CD8-positive, alpha-beta T cell (primary cell): ENCODE measurements at regions of chr2 and their contacts with region 1.

Region 1: GRCh38 chr2:30208452-30208851 is 22.9 kb upstream of the LBH start:
- DNase-seq: peak in 6 of 9 experiments; percentile 37 to 73 (median 55)
- ATAC-seq: peak; percentile 59
- H3K4me3 ChIP-seq: peak overlapping the region in 1 of 2 experiments; percentile 1
- H3K4me3 Mint-ChIP-seq: peak overlapping the region; percentile 59
- H3K27ac ChIP-seq: peak overlapping the region in 1 of 2 experiments; percentile 40
- H3K27ac Mint-ChIP-seq: peak overlapping the region; percentile 82
- H3K4me1 ChIP-seq: peaks cover 25% of the 10 kb centered on the region
- H3K4me1 Mint-ChIP-seq: peaks cover 26% of the 10 kb centered on the region
- H3K27me3 ChIP-seq: no peaks in the 10 kb centered on the region
- H3K27me3 Mint-ChIP-seq: no peaks in the 10 kb centered on the region
- CTCF ChIP-seq: peak; percentile 81

Region 2: GRCh38 chr2:29786361-29786760 is 422.1 kb before region 1 on chr2:
- CTCF ChIA-PET with region 1: no interaction called
- POLR2A ChIA-PET with region 1: no interaction called
- intact Hi-C with region 1: no loop called
- DNase-seq: no peak
- ATAC-seq: no peak
- H3K4me3 ChIP-seq: no peak overlapping the region
- H3K4me3 Mint-ChIP-seq: no peak overlapping the region
- H3K27ac ChIP-seq: no peak overlapping the region
- H3K27ac Mint-ChIP-seq: no peak overlapping the region
- H3K4me1 ChIP-seq: no peaks in the 10 kb centered on the region
- H3K4me1 Mint-ChIP-seq: no peaks in the 10 kb centered on the region
- H3K27me3 ChIP-seq: no peaks in the 10 kb centered on the region
- H3K27me3 Mint-ChIP-seq: peaks cover 15% of the 10 kb centered on the region
- CTCF ChIP-seq: no peak

Region 3: GRCh38 chr2:30115141-30115980 is 93.1 kb before region 1 on chr2:
- CTCF ChIA-PET with region 1: no interaction called
- POLR2A ChIA-PET with region 1: no interaction called
- intact Hi-C with region 1: no loop called
- DNase-seq: peak; percentile 30 to 73 (median 67)
- ATAC-seq: peak; percentile 49
- H3K4me3 ChIP-seq: no peak overlapping the region
- H3K4me3 Mint-ChIP-seq: no peak overlapping the region
- H3K27ac ChIP-seq: no peak overlapping the region
- H3K27ac Mint-ChIP-seq: peak overlapping the region; percentile 3
- H3K4me1 ChIP-seq: peaks cover 7% of the 10 kb centered on the region
- H3K4me1 Mint-ChIP-seq: peaks cover 7% of the 10 kb centered on the region
- H3K27me3 ChIP-seq: no peaks in the 10 kb centered on the region
- H3K27me3 Mint-ChIP-seq: no peaks in the 10 kb centered on the region
- CTCF ChIP-seq: peak; percentile 66

Region 4: GRCh38 chr2:30225131-30225762 is 16.8 kb after region 1 on chr2:
- CTCF ChIA-PET with region 1: interaction called, 347 read pairs
- POLR2A ChIA-PET with region 1: interaction called, 76 read pairs
- intact Hi-C with region 1: loop called (anchors 1 to 2 kb)
- DNase-seq: peak in 8 of 9 experiments; percentile 37 to 86 (median 57)
- ATAC-seq: peak; percentile 68
- H3K4me3 ChIP-seq: peak overlapping the region; percentile 59 to 61
- H3K4me3 Mint-ChIP-seq: peak overlapping the region; percentile 99
- H3K27ac ChIP-seq: peak overlapping the region; percentile 78 to 93
- H3K27ac Mint-ChIP-seq: peak overlapping the region; percentile 100
- H3K4me1 ChIP-seq: peaks cover 76% of the 10 kb centered on the region
- H3K4me1 Mint-ChIP-seq: peaks cover 83% of the 10 kb centered on the region
- H3K27me3 ChIP-seq: no peaks in the 10 kb centered on the region
- H3K27me3 Mint-ChIP-seq: no peaks in the 10 kb centered on the region
- CTCF ChIP-seq: no peak

Region 5: DNA sequence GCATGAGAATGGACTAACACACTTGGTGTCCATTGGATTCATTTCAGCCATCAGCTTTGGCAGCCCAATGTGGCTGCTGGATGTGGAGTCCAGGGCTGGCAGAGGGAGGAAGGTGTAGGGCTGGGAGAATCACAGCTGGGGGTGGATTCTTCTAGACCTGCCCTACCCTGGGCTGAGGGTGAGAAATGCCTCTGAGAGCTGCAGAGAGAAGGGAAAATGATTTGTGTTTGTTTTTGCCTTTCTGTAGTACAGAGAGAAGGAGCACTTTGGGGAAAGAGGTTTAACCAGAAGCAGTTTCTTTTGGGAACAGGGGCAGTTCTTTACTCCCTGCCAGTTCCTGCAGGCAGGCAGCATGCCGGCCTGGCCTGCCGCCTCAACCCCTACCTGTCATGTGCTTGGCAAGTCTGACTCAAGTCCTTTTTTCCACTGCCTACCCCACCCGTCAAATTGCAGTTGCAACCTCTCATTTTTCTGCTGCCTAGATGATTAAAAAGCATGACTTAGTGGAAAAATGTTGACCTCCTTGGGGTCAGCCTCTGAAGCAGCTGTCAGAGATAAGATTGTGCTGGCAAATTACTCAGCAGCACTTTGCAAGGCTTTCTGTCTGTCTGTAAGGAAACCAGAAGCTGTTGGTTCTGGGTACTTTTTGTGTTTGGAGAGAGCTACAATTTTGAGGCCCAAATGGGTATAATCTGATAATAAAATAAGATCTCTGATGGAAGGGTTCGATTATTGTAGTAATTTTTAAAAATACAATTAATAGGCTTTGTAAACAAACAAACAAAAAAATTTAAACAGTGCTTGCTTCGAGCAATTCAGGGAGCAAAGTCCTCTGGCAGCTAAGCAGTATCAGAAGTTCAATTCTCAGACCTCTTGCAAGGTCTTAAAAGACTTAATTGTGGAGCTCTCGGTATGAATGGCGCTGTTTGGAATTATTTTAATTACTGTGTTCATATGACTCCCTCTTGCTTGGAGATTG is 44.6 kb after region 1 on chr2:
- CTCF ChIA-PET with region 1: interaction called, 29 read pairs
- POLR2A ChIA-PET with region 1: interaction called, 3 read pairs
- intact Hi-C with region 1: no loop called
- DNase-seq: peak in 7 of 9 experiments; percentile 36 to 64 (median 55)
- ATAC-seq: peak; percentile 37
- H3K4me3 ChIP-seq: peak overlapping the region in 1 of 2 experiments; percentile 17
- H3K4me3 Mint-ChIP-seq: peak overlapping the region; percentile 46
- H3K27ac ChIP-seq: peak overlapping the region; percentile 28 to 68
- H3K27ac Mint-ChIP-seq: peak overlapping the region; percentile 98
- H3K4me1 ChIP-seq: peaks cover 97% of the 10 kb centered on the region
- H3K4me1 Mint-ChIP-seq: peaks cover 96% of the 10 kb centered on the region
- H3K27me3 ChIP-seq: no peaks in the 10 kb centered on the region
- H3K27me3 Mint-ChIP-seq: no peaks in the 10 kb centered on the region
- CTCF ChIP-seq: no peak

Region 6: GRCh38 chr2:30366199-30366691 is 157.8 kb after region 1 on chr2:
- CTCF ChIA-PET with region 1: interaction called, 21 read pairs
- POLR2A ChIA-PET with region 1: no interaction called
- intact Hi-C with region 1: no loop called
- DNase-seq: peak in 6 of 9 experiments; percentile 25 to 68 (median 37)
- ATAC-seq: peak; percentile 70
- H3K4me3 ChIP-seq: no peak overlapping the region
- H3K4me3 Mint-ChIP-seq: no peak overlapping the region
- H3K27ac ChIP-seq: no peak overlapping the region
- H3K27ac Mint-ChIP-seq: peak overlapping the region; percentile 19
- H3K4me1 ChIP-seq: peaks cover 33% of the 10 kb centered on the region
- H3K4me1 Mint-ChIP-seq: peaks cover 49% of the 10 kb centered on the region
- H3K27me3 ChIP-seq: no peaks in the 10 kb centered on the region
- H3K27me3 Mint-ChIP-seq: no peaks in the 10 kb centered on the region
- CTCF ChIP-seq: no peak

Region 7: DNA sequence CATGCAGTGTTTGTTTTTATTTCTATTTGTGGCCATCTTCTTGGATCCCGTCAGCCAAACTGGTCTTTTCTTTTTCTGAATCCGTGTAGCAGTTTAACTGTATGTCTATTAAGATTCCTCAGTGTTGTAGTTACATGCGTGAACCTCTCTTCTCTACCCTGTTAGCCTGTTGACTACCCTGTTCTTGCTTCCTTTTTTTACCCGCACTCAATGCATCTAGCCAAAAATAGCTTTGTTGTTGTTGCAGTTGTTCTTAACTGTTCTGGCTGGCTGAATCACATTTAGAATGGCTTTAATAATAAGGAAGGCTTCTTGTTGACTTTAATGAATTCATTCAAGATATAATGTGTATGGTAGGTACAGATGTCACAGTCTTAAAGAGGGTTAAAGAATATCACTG is 375.7 kb after region 1 on chr2:
- CTCF ChIA-PET with region 1: no interaction called
- POLR2A ChIA-PET with region 1: no interaction called
- intact Hi-C with region 1: no loop called
- DNase-seq: no peak
- ATAC-seq: no peak
- H3K4me3 ChIP-seq: no peak overlapping the region
- H3K4me3 Mint-ChIP-seq: no peak overlapping the region
- H3K27ac ChIP-seq: no peak overlapping the region
- H3K27ac Mint-ChIP-seq: no peak overlapping the region
- H3K4me1 ChIP-seq: no peaks in the 10 kb centered on the region
- H3K4me1 Mint-ChIP-seq: peaks cover 12% of the 10 kb centered on the region
- H3K27me3 ChIP-seq: no peaks in the 10 kb centered on the region
- H3K27me3 Mint-ChIP-seq: no peaks in the 10 kb centered on the region
- CTCF ChIP-seq: no peak

Region 8: DNA sequence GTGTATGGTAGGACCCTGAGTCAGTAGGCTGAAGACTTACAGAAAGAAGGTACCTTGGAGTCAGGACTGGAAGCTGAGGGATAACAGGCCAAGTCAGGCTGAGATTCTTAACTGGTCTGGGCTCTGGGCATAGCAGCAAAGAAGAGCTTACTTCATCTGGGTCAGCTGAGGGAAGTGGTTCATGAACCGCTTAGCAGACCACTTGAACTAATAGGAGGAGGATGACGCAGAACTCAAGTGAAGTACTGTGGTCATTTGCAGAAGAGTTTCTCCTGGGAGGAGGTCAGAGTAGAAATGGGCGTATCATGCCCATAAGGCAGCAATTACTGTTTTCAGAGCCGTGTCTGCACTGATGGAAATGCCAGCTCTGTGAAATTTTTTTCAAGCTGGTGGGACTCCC is 403.1 kb after region 1 on chr2:
- CTCF ChIA-PET with region 1: no interaction called
- POLR2A ChIA-PET with region 1: no interaction called
- intact Hi-C with region 1: no loop called
- DNase-seq: no peak
- ATAC-seq: no peak
- H3K4me3 ChIP-seq: no peak overlapping the region
- H3K4me3 Mint-ChIP-seq: no peak overlapping the region
- H3K27ac ChIP-seq: no peak overlapping the region
- H3K27ac Mint-ChIP-seq: no peak overlapping the region
- H3K4me1 ChIP-seq: no peaks in the 10 kb centered on the region
- H3K4me1 Mint-ChIP-seq: no peaks in the 10 kb centered on the region
- H3K27me3 ChIP-seq: no peaks in the 10 kb centered on the region
- H3K27me3 Mint-ChIP-seq: no peaks in the 10 kb centered on the region
- CTCF ChIP-seq: no peak

Region 9: DNA sequence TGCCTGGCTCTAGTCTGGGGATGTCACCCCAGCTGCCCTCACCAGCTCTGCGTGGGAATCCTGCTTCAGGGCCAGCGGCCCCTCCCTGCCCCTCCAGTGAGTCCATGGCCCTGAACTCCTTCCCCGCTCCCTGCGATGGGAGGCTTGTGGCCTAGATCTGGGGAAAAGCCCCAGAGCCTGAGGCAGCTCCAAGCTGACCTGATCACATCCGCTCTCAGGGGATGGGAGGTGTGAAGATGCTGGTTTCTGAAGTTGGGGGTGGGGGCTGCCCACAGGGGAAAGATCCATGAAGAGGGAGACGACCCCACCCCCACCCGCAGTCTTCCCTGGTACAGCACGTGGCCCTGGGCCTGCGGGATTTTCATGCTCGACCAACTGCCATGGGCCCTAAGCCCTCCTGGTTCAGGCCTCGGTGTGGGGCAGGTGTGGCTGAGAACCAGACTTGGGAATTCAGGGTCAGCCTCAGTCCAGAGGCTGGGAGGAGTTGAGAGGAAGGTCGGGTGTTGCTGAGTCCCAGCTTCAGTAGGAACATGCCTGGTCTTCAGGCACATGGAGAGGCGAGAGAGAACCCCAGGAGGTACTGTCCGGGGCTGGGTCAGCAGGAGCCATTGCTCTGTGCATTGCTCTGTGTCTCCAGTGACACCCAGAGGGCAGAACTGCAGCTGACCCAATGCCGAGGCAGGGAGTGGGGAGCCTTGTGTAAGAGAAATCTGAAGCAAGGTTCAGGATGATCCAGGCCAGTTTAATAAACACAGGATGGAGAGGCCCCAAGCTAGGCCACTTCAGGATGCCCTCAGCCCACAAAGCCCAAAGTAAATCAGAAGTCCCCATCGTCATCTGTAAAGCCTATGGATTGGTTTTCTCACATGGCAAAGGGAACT is 483.7 kb after region 1 on chr2:
- CTCF ChIA-PET with region 1: interaction called, 15 read pairs
- POLR2A ChIA-PET with region 1: no interaction called
- intact Hi-C with region 1: no loop called
- DNase-seq: peak in 1 of 9 experiments; percentile 42
- ATAC-seq: no peak
- H3K4me3 ChIP-seq: no peak overlapping the region
- H3K4me3 Mint-ChIP-seq: no peak overlapping the region
- H3K27ac ChIP-seq: no peak overlapping the region
- H3K27ac Mint-ChIP-seq: no peak overlapping the region
- H3K4me1 ChIP-seq: no peaks in the 10 kb centered on the region
- H3K4me1 Mint-ChIP-seq: no peaks in the 10 kb centered on the region
- H3K27me3 ChIP-seq: peaks cover 0 to 4% of the 10 kb centered on the region in 2 experiments
- H3K27me3 Mint-ChIP-seq: peaks cover 2% of the 10 kb centered on the region
- CTCF ChIP-seq: no peak